GM10248 (cell line): ENCODE measurements at regions of chr5 and their contacts with region 1.

Region 1: DNA sequence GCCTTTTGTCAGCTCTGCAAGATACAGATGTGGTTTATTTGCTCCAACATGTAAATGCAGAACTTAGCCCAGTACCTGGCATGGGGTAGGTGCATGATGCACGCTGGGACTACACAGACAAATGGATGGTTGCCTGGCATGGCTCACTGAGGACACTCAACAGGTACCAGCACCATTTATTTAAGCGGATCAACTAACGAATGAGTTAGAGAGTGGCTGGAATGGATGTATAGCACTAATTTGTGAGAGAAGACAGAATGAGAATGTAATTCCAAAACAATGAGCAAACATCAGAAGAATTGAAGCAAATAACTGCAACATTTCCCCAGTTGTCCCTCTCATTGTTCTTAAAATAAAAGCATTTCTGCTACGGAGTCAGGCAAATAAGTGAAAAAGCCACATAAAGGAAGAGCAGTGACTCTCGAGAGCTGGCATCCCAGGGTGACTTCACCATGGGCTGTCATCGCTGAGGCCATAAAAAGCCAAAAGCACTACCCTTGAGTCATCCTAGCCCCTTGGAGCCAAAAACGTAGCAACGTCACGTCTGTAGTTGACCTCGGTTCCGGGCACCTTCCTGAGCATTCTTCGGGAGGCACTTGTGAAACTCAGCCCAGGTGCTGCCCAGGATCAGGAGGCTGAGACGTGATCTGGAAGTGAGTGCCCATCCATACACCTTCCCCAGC is 290.3 kb downstream of the NSG2 start:
- DNase-seq: no peak
- CTCF ChIP-seq: no peak

Region 2: DNA sequence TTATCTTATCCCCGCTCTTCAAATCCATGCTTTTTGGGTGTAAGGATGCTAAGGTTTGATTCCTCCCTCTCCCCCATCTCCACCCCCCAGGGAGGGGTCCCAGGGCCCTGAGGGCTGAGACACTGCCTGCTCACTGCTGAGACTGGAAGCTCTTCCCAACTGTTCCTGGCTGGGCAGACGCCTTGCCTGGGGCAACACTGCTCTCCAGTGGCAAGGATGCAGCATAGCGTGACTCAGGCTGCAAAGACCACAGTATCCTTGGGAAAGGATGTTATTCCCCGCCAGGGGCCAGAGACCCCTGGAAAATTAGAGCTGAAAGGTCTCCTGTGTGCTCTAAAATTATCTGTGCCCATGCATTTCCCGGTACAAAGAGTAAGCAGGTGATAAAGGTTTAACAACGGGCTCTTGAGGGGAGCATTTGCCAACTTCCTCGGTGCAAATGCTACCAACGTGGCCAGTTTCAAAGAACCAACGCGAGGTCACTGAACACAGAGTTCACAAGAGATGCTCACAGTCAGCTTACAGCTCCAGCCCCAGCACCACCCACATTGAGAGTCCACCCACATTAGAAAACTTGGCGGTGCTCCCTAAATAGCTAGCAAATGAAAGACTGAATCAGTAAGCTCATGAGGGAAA is 18.4 kb before region 1 on chr5:
- CTCF ChIA-PET with region 1: interaction called, 10 read pairs
- POLR2A ChIA-PET with region 1: no interaction called
- DNase-seq: peak; percentile 42
- CTCF ChIP-seq: peak; percentile 67